Activated B cell treated with CpG ODN at 0.5 μM for 24 hours (primary cell): ENCODE measurements at regions of chr11 and their contacts with region 1.

Region 1: GRCh38 chr11:18395735-18396504 is 1.6 kb downstream of the LDHA start:
- DNase-seq: peak; percentile 96
- ATAC-seq: peak; percentile 76
- H3K4me3 Mint-ChIP-seq: peak overlapping the region; percentile 96
- H3K27ac Mint-ChIP-seq: peak overlapping the region; percentile 91
- H3K4me1 Mint-ChIP-seq: peaks cover 18% of the 10 kb centered on the region
- H3K27me3 Mint-ChIP-seq: no peaks in the 10 kb centered on the region
- CTCF ChIP-seq: no peak

Region 2: DNA sequence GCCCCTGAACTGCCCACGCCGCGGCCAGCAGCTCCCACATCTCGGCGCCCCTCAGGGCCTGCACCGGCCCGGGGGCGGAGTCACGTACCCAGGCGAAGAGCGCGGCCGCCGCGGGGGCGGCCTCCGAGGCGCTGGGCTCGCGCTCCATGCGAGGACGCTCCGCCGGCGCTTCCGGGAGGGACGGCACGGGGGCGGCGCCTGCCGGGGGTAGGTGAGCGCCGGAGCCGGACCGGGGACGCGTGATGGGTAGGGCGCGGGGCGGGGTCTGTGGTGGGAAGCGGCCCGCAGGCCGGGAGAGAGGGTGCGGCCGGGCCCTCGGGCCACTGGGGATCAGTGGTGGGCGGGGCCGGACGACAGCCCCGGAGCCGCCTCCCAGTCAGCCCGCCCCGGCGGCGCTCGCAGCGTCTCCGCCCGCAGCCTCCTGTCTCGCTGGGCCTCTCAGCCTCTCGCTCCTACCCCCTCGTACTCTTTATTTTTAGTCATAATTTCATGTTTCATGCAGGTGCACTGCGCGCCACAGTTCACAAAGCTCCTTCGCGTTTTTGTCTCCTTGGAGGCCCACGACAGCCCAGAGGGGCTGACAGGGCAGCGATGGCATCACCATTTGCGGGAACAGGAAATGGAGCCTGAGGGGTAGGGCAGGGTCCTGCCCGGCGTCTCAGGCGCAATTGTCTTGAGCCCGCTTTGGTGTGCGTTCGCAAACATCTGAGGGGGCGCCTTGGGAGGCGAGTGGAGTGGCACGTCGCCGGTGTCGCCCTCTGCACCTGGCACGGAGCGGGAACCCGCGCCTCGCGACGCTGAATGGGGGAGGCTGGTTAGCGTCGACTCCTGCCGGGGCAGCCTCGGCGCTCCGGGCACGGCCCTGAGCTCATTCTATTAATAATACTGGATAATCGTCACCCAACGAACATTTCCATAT is 382.8 kb before region 1 on chr11 and contains the start of gene SERGEF:
- CTCF ChIA-PET with region 1: no interaction called
- POLR2A ChIA-PET with region 1: interaction called, 9 read pairs
- intact Hi-C with region 1: loop called (anchors 2 kb)
- DNase-seq: peak; percentile 96
- ATAC-seq: peak; percentile 94
- H3K4me3 Mint-ChIP-seq: peak within 1 kb of the TSS; percentile 100
- H3K27ac Mint-ChIP-seq: peak within 1 kb of the TSS; percentile 99
- H3K4me1 Mint-ChIP-seq: peaks cover 16% of the 10 kb centered on the region
- H3K27me3 Mint-ChIP-seq: no peaks in the 10 kb centered on the region
- CTCF ChIP-seq: no peak
- total RNA-seq, gene SERGEF: 38.4 and 47.4 TPM in 2 replicates

Region 3: DNA sequence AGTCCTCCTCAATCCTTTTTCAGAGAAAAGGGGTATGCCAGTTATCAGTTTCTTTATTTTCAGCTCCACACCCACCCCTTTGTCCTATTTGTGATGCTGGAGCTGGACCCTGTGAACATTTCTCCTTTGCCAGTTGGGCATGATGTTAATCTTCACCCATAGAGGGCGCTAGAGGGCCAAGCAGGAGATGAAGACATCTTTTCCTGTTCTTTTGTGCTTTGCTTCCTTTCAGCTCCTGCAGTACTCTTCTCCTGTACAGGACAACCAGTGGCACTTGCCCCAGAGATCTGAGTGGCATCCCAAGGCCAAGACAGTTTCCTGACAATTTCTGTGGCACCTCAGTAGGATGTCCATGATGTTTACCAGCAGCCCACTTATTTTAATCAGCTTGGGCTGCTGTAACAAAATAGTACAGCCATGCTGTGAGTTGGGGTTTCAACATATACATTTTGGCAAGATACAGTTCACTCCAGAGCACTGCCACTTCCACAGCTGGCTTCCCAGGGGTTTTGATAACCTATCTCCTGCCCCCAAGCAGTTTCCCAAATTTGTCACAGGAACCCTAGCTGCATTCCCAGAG is 152.0 kb before region 1 on chr11:
- CTCF ChIA-PET with region 1: interaction called, 8 read pairs
- POLR2A ChIA-PET with region 1: interaction called, 5 read pairs
- intact Hi-C with region 1: loop called (anchors 1 kb)
- DNase-seq: no peak
- ATAC-seq: no peak
- H3K4me3 Mint-ChIP-seq: no peak overlapping the region
- H3K27ac Mint-ChIP-seq: no peak overlapping the region
- H3K4me1 Mint-ChIP-seq: peaks cover 15% of the 10 kb centered on the region
- H3K27me3 Mint-ChIP-seq: peaks cover 16% of the 10 kb centered on the region
- CTCF ChIP-seq: no peak

Region 4: GRCh38 chr11:18332302-18332701 is 63.6 kb before region 1 on chr11:
- CTCF ChIA-PET with region 1: no interaction called
- POLR2A ChIA-PET with region 1: interaction called, 12 read pairs
- intact Hi-C with region 1: no loop called
- DNase-seq: no peak
- ATAC-seq: peak; percentile 39
- H3K4me3 Mint-ChIP-seq: peak overlapping the region; percentile 66
- H3K27ac Mint-ChIP-seq: peak overlapping the region; percentile 88
- H3K4me1 Mint-ChIP-seq: peaks cover 42% of the 10 kb centered on the region
- H3K27me3 Mint-ChIP-seq: no peaks in the 10 kb centered on the region
- CTCF ChIP-seq: no peak

Region 5: DNA sequence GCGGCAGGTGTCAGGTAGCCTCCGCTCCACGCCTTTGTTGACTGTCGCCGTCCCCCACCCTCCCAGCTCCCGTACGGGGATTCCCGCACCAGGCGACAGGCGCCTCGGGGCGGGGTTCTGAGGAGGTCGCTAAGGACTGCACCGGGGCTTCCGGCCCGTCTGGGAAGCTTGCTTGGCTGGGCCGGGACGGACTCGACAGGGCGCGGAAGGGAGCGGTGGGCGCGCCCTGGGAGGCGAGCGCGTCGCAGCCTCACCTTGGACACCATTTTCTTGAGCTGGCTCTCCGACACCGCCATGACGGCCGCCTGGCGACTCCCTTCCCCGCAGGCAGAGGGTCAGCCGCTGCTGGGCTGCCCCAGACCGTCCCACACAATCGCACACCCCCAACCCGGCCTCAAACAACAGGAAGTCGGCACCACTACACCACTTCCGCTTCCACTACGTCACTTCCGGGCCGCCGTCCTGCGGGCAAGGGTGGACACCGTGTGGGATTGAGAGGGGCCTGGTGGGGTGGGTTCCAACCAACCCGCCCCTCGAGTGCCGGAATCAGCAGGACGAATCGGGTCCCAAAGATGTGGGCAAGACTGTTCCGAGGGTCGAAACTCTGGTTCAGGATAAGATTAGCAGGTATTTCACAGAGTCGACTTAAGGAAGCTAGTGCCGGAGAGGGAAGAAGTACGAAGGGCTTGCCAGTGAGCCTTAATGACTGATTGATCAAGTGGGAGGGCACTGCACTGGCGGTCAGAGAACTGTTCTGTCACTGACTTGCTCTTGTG is 130.8 kb after region 1 on chr11 and contains the start of gene TSG101:
- CTCF ChIA-PET with region 1: interaction called, 3 read pairs
- POLR2A ChIA-PET with region 1: interaction called, 53 read pairs
- intact Hi-C with region 1: loop called (anchors 1 kb)
- DNase-seq: peak; percentile 95
- ATAC-seq: peak; percentile 84
- H3K4me3 Mint-ChIP-seq: peak within 1 kb of the TSS; percentile 100
- H3K27ac Mint-ChIP-seq: peak within 1 kb of the TSS; percentile 100
- H3K4me1 Mint-ChIP-seq: peaks cover 44% of the 10 kb centered on the region
- H3K27me3 Mint-ChIP-seq: no peaks in the 10 kb centered on the region
- CTCF ChIP-seq: no peak
- total RNA-seq, gene TSG101: 45.3 and 47.2 TPM in 2 replicates

Region 6: DNA sequence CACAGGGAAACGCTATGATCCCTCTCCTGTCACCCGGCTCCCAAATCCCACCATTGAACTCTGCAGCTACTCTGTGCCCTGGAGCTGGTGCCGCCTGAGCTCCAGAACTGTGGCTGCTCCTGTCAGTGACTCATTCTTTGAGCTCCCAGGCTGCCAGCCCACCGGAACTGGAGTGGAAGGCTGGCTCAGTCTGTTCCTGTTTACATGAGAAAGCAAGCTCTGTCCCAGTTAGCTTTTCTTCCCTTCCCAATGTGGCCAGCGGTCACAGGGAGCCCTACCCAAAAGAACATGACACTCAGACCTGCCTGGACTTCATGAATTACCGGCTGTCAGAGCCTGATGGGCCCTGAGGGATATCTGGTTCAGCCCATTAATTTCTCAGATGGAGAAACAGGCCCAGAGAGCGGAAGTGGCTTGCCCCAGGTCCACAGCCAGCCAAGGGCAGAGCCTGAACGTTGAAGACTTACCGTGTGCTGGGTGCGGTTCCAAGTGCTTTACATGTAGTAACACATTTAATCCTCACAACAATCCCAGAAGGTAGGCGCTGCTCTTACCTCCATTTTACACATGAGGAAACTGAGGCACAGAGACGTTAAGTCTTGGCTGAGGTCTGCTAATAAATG is 353.9 kb after region 1 on chr11:
- CTCF ChIA-PET with region 1: no interaction called
- POLR2A ChIA-PET with region 1: no interaction called
- intact Hi-C with region 1: no loop called
- DNase-seq: no peak
- ATAC-seq: no peak
- H3K4me3 Mint-ChIP-seq: no peak overlapping the region
- H3K27ac Mint-ChIP-seq: no peak overlapping the region
- H3K4me1 Mint-ChIP-seq: no peaks in the 10 kb centered on the region
- H3K27me3 Mint-ChIP-seq: peaks cover 22% of the 10 kb centered on the region
- CTCF ChIP-seq: no peak

Region 7: DNA sequence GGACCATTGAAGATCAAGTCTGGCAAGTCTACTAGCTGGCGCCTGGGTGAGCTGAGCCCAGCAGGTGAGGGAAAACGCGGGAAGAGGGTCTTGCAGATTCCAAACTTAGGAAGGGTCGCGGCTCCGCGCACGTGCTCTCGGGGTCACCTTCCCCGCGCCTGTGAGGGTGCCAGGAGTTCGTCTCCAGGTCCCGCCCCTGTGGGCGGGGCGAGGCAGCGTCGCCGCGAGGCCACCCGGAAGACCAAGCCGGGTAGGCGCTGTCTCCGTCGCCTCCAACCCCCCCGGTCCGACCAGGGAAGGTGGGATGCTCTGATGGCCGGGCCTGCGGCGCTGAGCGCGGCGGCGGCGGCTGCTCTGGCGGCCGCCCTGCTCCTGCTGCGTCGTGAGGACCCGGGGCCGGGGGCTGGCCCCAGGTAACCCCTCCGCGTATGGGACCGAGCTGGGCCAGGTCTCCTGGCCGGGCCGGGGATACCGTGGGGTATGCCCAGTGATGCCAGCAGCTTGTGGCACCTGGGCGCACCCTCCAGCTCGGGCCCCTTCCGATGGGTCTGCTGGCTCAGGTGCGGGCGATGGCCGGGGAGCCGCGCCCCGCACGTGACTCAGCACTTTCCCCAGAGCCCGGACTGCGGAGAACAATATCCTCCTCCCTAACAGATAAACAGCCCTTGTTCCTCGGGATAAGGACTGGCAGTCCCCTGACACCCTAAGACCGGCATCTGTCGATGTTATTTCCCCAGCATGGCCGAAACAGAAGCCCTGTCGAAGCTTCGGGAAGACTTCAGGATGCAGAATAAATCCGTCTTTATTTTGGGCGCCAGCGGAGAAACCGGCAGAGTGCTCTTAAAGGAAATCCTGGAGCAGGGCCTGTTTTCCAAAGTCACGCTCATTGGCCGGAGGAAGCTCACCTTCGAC is 1967.8 kb after region 1 on chr11 and contains the start of gene HTATIP2:
- CTCF ChIA-PET with region 1: no interaction called
- POLR2A ChIA-PET with region 1: no interaction called
- intact Hi-C with region 1: loop called (anchors 10 kb)
- DNase-seq: peak; percentile 78
- ATAC-seq: peak; percentile 87
- H3K4me3 Mint-ChIP-seq: peak within 1 kb of the TSS; percentile 88
- H3K27ac Mint-ChIP-seq: peak within 1 kb of the TSS; percentile 89
- H3K4me1 Mint-ChIP-seq: peaks cover 57% of the 10 kb centered on the region
- H3K27me3 Mint-ChIP-seq: no peaks in the 10 kb centered on the region
- CTCF ChIP-seq: no peak
- total RNA-seq, gene HTATIP2: 35.7 and 36.5 TPM in 2 replicates